B cell (primary cell): ENCODE measurements at regions of chr1 and their contacts with region 1.

Region 1: DNA sequence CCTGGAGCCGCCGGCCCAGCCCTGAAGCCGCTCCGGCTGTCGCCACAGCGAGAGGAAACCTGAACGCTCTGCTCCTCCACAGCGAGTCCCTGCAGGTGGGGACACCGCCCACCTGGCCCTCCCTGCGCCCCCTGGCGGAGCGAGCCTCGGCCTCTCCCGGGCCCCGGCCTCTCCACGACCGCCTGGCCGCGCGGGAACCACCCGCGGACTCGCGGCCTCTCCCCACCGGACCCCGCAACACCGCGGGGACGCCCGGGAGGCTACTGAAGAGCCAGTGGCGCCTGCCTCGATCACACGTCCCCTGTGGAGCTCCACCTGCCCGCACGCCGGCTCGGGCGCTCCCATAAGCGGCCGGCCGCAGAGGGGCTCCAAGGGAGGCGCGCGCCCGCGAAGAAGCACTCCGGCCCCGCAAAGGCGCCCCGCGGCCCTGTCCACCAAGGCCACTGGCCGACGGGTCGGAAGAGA is 109.6 kb downstream of the KCNN3 start:
- DNase-seq: peak; percentile 85
- ATAC-seq: peak; percentile 95
- H3K4me3 ChIP-seq: peak overlapping the region in 3 of 5 experiments; percentile 28 to 35 (median 31)
- H3K4me3 Mint-ChIP-seq: no peak overlapping the region
- H3K27ac ChIP-seq: no peak overlapping the region
- H3K27ac Mint-ChIP-seq: no peak overlapping the region
- H3K4me1 ChIP-seq: peaks cover 3 to 9% of the 10 kb centered on the region in 2 donors
- H3K4me1 Mint-ChIP-seq: no peaks in the 10 kb centered on the region
- H3K27me3 ChIP-seq: peaks cover 0 to 28% (median 7%) of the 10 kb centered on the region in 4 experiments
- H3K27me3 Mint-ChIP-seq: peaks cover 41% of the 10 kb centered on the region
- CTCF ChIP-seq: peak; percentile 90

Region 2: DNA sequence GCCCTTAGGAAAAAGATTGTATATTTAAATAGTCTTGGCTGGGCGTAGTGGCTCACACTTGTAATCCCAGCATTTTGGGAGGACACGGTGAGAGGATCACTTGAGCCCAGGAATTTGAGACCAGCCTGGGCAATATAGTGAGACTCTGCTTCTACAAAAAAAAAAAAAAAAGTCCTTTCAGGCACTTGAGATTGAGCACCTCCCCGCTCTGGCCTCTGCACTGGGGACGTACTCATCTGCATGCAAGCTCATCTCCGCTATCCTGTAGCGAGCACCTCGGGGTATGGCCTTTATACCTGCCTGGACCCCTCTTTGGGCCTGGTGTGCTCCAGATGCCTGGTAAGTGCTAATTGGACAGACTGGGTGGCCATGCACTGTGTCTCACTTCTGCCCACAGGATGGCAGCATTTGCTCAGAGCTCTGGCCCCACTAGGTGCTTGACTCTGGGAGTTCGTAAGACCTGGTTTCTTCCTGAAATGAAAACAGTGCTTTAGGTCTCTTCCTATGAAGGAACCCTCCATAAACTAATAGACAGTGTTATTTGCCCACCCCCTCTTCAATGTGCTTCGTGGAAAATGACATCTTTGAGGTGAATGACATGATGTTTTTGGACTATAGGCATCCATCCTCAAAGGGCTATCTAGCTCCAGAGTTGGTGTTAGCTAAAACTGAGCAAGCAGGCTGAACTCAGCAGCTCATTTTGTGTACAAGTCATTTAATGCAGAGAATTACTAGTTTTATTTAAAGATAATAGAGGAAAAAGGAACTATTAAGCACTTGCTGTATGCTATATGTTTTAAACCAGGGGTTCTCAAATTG is 90.8 kb before region 1 on chr1:
- CTCF ChIA-PET with region 1: interaction called, 6 read pairs
- POLR2A ChIA-PET with region 1: no interaction called
- intact Hi-C with region 1: loop called (anchors 2 kb)
- DNase-seq: peak; percentile 79
- ATAC-seq: peak; percentile 96
- H3K4me3 ChIP-seq: no peak overlapping the region
- H3K4me3 Mint-ChIP-seq: no peak overlapping the region
- H3K27ac ChIP-seq: no peak overlapping the region
- H3K27ac Mint-ChIP-seq: no peak overlapping the region
- H3K4me1 ChIP-seq: peaks cover 0 to 3% of the 10 kb centered on the region in 2 donors
- H3K4me1 Mint-ChIP-seq: no peaks in the 10 kb centered on the region
- H3K27me3 ChIP-seq: no peaks in the 10 kb centered on the region
- H3K27me3 Mint-ChIP-seq: peaks cover 7% of the 10 kb centered on the region
- CTCF ChIP-seq: peak; percentile 66

Region 3: DNA sequence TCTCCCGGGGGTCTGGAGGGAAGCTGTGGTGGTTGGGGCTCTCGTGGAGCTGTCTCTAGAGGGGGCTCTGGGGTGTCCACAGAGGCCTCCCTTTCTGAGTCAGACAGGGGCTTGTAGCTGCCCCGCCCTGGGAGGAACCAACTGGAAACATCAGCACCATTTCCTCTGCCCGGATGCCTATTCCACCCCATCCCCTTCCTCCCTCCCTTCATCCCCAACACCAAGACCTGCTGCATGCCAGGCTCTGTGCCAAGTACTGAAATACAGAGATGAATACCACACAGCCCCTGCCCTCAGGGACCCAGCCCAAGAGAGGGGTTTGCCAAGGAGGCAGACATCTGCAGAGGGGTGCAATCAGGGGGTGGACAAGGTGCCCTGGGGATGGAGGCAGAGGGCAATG is 26.9 kb before region 1 on chr1:
- CTCF ChIA-PET with region 1: no interaction called
- POLR2A ChIA-PET with region 1: no interaction called
- intact Hi-C with region 1: no loop called
- DNase-seq: no peak
- ATAC-seq: no peak
- H3K4me3 ChIP-seq: no peak overlapping the region
- H3K4me3 Mint-ChIP-seq: no peak overlapping the region
- H3K27ac ChIP-seq: no peak overlapping the region
- H3K27ac Mint-ChIP-seq: no peak overlapping the region
- H3K4me1 ChIP-seq: no peaks in the 10 kb centered on the region
- H3K4me1 Mint-ChIP-seq: no peaks in the 10 kb centered on the region
- H3K27me3 ChIP-seq: peaks cover 0 to 8% (median 0%) of the 10 kb centered on the region in 4 experiments
- H3K27me3 Mint-ChIP-seq: peaks cover 27% of the 10 kb centered on the region
- CTCF ChIP-seq: no peak

Region 4: GRCh38 chr1:154837034-154837671 is 76.7 kb after region 1 on chr1:
- CTCF ChIA-PET with region 1: no interaction called
- POLR2A ChIA-PET with region 1: no interaction called
- intact Hi-C with region 1: no loop called
- DNase-seq: no peak
- ATAC-seq: no peak
- H3K4me3 ChIP-seq: no peak overlapping the region
- H3K4me3 Mint-ChIP-seq: no peak overlapping the region
- H3K27ac ChIP-seq: no peak overlapping the region
- H3K27ac Mint-ChIP-seq: no peak overlapping the region
- H3K4me1 ChIP-seq: peaks cover 0 to 9% of the 10 kb centered on the region in 2 donors
- H3K4me1 Mint-ChIP-seq: peaks cover 6% of the 10 kb centered on the region
- H3K27me3 ChIP-seq: peaks cover 0 to 2% (median 0%) of the 10 kb centered on the region in 4 experiments
- H3K27me3 Mint-ChIP-seq: peaks cover 15% of the 10 kb centered on the region
- CTCF ChIP-seq: no peak

Region 5: GRCh38 chr1:154860156-154860870 is 99.8 kb after region 1 on chr1:
- CTCF ChIA-PET with region 1: interaction called, 10 read pairs
- POLR2A ChIA-PET with region 1: no interaction called
- intact Hi-C with region 1: no loop called
- DNase-seq: peak; percentile 74
- ATAC-seq: peak; percentile 67
- H3K4me3 ChIP-seq: peak overlapping the region in 2 of 5 experiments; percentile 12 to 37
- H3K4me3 Mint-ChIP-seq: peak overlapping the region; percentile 69
- H3K27ac ChIP-seq: peak overlapping the region in 1 of 2 donors; percentile 47
- H3K27ac Mint-ChIP-seq: peak overlapping the region; percentile 76
- H3K4me1 ChIP-seq: peaks cover 41 to 66% of the 10 kb centered on the region in 2 donors
- H3K4me1 Mint-ChIP-seq: peaks cover 52% of the 10 kb centered on the region
- H3K27me3 ChIP-seq: peaks cover 0 to 11% (median 0%) of the 10 kb centered on the region in 4 experiments
- H3K27me3 Mint-ChIP-seq: peaks cover 6% of the 10 kb centered on the region
- CTCF ChIP-seq: no peak

Region 6: DNA sequence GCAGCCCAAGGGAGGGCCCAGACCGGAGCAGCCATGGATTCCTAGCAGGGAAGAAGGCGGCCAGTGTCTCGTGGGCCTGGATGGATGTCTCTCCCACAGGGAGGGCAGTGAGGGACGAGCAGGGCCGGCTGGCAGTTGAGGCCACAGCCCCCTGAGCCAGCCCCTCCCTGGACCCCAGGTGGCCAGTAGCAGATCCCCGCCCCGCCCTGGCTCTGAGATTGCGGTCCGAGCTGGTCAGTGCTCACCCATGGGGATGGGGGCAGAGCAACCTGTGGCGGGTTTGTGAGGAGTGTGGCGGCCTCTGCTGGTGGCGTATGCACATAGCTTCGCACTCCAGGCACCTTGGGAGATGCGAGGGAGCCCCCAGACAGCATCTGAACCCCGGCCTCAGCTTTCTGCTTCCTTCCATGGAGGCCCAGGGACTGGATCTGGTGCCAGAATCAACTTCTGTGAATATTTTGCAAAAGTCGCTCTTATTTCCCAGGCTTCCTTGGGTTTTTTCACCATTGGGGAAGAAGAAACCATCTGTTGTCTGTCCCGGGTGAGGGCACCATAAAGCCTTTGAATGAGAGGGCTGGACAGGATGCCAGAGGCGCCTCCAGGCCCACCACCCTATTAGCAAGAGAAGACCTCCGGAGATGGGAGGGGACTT is 118.0 kb after region 1 on chr1:
- CTCF ChIA-PET with region 1: interaction called, 9 read pairs
- POLR2A ChIA-PET with region 1: no interaction called
- intact Hi-C with region 1: loop called (anchors 1 kb)
- DNase-seq: peak; percentile 78
- ATAC-seq: peak; percentile 93
- H3K4me3 ChIP-seq: no peak overlapping the region
- H3K4me3 Mint-ChIP-seq: no peak overlapping the region
- H3K27ac ChIP-seq: no peak overlapping the region
- H3K27ac Mint-ChIP-seq: no peak overlapping the region
- H3K4me1 ChIP-seq: peaks cover 0 to 2% of the 10 kb centered on the region in 2 donors
- H3K4me1 Mint-ChIP-seq: no peaks in the 10 kb centered on the region
- H3K27me3 ChIP-seq: no peaks in the 10 kb centered on the region
- H3K27me3 Mint-ChIP-seq: no peaks in the 10 kb centered on the region
- CTCF ChIP-seq: peak; percentile 89